ENCODE measurements at regions of chr4 and their contacts with region 1.

Region 1: GRCh38 chr4:129082302-129082701 is 11.0 kb downstream of the SCLT1 start:
- DNase-seq: no peak
- H3K4me3 ChIP-seq: no peak overlapping the region
- H3K27ac ChIP-seq: no peak overlapping the region
- H3K4me1 ChIP-seq: no peaks in the 10 kb centered on the region
- CTCF ChIP-seq: no peak

Region 2: GRCh38 chr4:129093191-129093920 is 11.1 kb after region 1 on chr4 and contains the start of gene SCLT1:
- CTCF ChIA-PET with region 1: no interaction called
- POLR2A ChIA-PET with region 1: interaction called, 10 read pairs
- intact Hi-C with region 1: no loop called
- DNase-seq: peak; percentile 98
- H3K4me3 ChIP-seq: peak within 1 kb of the TSS; percentile 88
- H3K27ac ChIP-seq: peak within 1 kb of the TSS; percentile 77
- H3K4me1 ChIP-seq: peaks cover 41% of the 10 kb centered on the region
- CTCF ChIP-seq: no peak
- total RNA-seq, gene SCLT1: 36.9 and 42.5 TPM in 2 replicates

Region 3: DNA sequence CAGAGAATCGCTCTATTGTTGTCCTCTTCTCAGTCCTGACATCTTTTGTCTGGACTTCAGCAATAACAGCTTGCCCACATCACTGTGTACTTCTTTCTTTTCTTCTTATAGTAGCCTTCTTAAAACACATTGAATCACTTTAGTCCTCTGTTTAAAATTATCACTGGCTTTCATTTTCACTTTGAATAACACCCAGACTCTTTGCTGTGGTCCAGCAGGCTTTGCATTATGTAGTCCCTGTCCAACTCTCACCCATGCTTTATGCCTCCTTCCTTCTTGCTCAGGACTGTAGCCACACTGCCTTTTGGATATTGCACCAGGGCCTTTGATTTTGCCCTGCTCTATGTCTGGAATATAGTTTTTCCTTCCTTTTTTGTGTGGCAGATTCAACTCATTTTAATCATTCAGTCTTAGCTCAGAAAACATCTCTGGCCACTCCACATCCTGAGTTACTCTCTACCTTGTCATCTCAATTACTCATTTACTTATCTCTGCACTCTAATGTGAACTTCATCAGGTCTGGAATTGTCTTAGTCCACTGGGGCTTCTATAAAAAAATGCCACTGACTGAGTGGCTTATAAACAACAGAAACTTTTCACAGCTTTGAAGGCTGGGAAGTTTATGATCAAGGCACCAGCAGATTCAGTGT is 181.8 kb after region 1 on chr4:
- CTCF ChIA-PET with region 1: no interaction called
- POLR2A ChIA-PET with region 1: no interaction called
- intact Hi-C with region 1: no loop called
- DNase-seq: no peak
- H3K4me3 ChIP-seq: no peak overlapping the region
- H3K27ac ChIP-seq: no peak overlapping the region
- H3K4me1 ChIP-seq: no peaks in the 10 kb centered on the region
- CTCF ChIP-seq: no peak

Measured in OCI-LY7 (cell line).